Heart right ventricle (tissue), 16 donors: ENCODE measurements at regions of chr6 and their contacts with region 1.

Region 1: DNA sequence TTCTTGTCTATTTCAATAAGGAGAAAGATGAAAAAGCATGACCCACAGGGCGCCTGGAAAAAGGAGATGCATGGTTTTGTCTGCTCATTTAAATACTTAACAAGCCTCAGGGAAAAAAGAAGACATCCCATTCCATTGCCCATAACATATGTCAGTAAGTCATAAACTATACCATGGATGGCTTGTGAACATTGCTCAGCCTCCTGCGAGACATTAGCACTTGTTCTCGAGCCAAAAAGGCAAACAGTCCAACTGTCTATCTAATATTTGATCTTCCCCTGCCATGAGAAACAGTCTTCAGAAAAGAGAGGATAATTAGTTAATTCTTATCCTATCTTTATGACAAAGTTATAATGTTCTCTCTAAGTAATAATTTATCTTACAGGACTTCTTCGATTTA is 527.4 kb downstream of the HACE1 start:
- DNase-seq: no peak
- ATAC-seq: no peak
- H3K4me3 ChIP-seq: no peak overlapping the region
- H3K27ac ChIP-seq: no peak overlapping the region
- H3K4me1 ChIP-seq: no peaks in the 10 kb centered on the region
- H3K27me3 ChIP-seq: no peaks in the 10 kb centered on the region
- CTCF ChIP-seq: no peak

Region 2: DNA sequence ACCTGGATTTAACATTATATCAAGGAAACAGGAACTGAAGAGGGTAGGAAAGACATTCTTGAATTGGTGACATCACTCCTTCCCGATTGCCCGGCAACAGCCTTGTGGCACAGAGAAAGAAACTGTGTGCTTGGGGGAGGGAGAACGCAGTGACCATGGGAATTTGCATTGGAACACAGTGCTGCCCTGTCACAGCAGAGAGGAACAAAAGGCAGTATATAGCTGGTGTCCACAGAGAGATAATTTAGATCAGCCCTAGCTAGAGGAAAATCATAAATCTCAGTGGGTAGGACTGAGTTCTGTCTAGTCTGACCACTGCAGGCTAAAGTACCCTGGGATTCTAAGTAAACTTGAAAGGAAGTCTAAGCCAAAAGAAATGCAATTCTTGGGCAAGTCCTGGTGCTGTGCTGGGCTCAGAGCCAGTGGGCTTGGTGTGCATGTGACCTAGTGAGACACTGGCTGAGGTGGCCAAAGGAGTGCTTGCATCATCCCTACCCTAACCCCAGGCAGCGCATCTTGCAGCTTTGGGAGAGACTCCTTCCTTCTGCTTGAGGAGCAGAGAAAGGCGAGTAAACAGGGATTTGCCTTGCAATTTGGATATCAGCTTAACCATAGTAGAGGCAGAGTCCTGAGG is 170.2 kb before region 1 on chr6:
- intact Hi-C with region 1: no loop called
- DNase-seq: no peak
- ATAC-seq: no peak
- H3K4me3 ChIP-seq: no peak overlapping the region
- H3K27ac ChIP-seq: no peak overlapping the region
- H3K4me1 ChIP-seq: no peaks in the 10 kb centered on the region
- H3K27me3 ChIP-seq: no peaks in the 10 kb centered on the region
- CTCF ChIP-seq: no peak

Region 3: GRCh38 chr6:104212977-104213668 is 119.2 kb before region 1 on chr6:
- intact Hi-C with region 1: no loop called
- DNase-seq: no peak
- ATAC-seq: no peak
- H3K4me3 ChIP-seq: no peak overlapping the region
- H3K27ac ChIP-seq: no peak overlapping the region
- H3K4me1 ChIP-seq: no peaks in the 10 kb centered on the region
- H3K27me3 ChIP-seq: peaks cover 0 to 3% (median 0%) of the 10 kb centered on the region in 7 donors
- CTCF ChIP-seq: no peak

Region 4: DNA sequence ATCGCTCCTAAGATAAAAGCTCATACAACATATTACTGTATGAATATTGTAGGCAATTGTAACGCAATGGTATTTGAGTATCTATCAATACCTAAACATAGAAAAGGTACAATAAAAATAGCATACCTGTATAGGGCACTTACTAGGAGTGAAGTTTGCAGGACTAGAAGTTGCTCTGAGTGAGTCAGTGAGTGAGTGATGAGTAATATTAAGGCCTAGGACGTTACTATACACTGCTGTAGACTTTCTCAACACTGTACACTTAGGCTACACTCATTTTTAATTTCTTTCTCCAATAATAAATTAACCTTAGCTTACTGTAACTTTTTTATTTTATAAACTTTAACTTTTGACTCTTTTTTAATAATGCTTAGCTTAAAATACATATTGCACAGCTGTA is 19.5 kb before region 1 on chr6:
- intact Hi-C with region 1: loop called in 1 of 10 experiments (anchors 2 kb)
- DNase-seq: no peak
- ATAC-seq: no peak
- H3K4me3 ChIP-seq: no peak overlapping the region
- H3K27ac ChIP-seq: no peak overlapping the region
- H3K4me1 ChIP-seq: no peaks in the 10 kb centered on the region
- H3K27me3 ChIP-seq: no peaks in the 10 kb centered on the region
- CTCF ChIP-seq: no peak